Heart left ventricle (tissue), 16 donors: ENCODE measurements at regions of chr6 and their contacts with region 1.

Region 1: DNA sequence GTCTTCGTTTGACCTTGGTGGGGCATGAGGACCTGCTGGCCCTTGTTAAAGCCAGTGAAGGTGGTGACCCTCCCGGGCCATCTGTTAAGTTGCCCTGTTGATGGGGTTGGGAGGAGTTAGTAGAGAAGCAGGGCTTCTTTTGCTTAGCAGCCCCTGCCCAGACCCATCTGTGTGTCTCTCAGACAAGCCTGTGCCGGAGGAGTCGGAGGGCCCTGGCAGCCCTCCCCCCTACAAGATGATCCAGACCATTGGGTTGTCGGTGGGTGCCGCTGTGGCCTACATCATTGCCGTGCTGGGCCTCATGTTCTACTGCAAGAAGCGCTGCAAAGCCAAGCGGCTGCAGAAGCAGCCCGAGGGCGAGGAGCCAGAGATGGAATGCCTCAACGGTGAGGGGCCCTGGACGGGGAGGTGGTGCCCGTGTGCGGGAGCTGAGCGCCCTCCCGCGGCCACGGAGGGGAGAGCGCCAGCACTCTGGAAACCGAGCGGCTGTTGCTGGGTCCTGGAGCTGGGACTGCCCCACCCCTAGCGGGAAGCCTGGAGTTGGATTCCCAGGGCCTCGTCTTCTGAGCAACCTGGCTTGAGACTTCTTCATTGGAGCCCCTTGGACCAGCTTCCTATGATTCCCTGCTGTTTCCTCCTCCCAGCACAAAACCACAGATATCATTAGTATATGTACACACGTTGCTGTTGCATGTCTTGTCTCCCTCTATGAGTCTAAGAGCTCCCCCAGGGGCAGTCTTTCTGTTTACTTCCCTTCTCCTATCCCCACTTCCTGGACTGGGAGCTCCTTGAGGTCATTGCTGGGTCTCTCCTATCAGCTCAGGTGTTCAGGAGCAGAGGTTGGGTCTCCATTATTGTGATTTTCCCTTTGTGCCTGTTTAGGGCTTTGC is 27.6 kb upstream of the SRF start:
- DNase-seq: peak; percentile 87 to 95 (median 90)
- ATAC-seq: peak; percentile 84 to 97 (median 96)
- H3K4me3 ChIP-seq: peak overlapping the region in 2 of 12 donors; percentile 12 to 32
- H3K27ac ChIP-seq: peak overlapping the region in 8 of 12 donors; percentile 2 to 70 (median 34)
- H3K4me1 ChIP-seq: peaks cover 0 to 17% (median 11%) of the 10 kb centered on the region in 12 donors
- H3K27me3 ChIP-seq: no peaks in the 10 kb centered on the region
- CTCF ChIP-seq: peak; percentile 86 to 98 (median 94)
- POLR2A ChIP-seq: no peak

Region 2: DNA sequence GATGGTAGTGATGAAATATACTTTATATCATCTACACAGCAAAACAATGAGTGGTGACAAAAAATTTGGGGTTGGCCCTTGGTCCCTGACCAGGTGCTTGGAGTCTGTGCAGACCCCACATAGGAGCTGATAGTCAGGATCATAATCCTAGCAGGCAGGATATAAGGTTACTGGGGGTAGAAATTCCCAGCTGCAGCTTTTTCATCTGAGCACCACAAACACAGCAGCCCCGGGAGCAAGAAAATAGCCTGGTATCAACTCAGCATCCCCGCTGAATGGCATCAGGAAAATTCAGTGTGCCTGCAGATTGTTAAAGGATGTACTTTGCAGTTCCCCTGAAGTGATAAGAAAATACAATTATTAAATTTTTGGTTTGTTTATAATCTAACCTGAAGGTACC is 291.9 kb before region 1 on chr6:
- intact Hi-C with region 1: no loop called
- DNase-seq: no peak
- ATAC-seq: no peak
- H3K4me3 ChIP-seq: no peak overlapping the region
- H3K27ac ChIP-seq: no peak overlapping the region
- H3K4me1 ChIP-seq: no peaks in the 10 kb centered on the region
- H3K27me3 ChIP-seq: no peaks in the 10 kb centered on the region
- CTCF ChIP-seq: no peak
- POLR2A ChIP-seq: no peak

Region 3: GRCh38 chr6:42907336-42907735 is 236.1 kb before region 1 on chr6:
- intact Hi-C with region 1: loop called in 2 of 10 experiments (anchors 2 to 5 kb)
- DNase-seq: peak in 3 of 5 donors; percentile 20 to 53 (median 47)
- ATAC-seq: peak in 3 of 4 donors; percentile 76 to 80 (median 77)
- H3K4me3 ChIP-seq: no peak overlapping the region
- H3K27ac ChIP-seq: no peak overlapping the region
- H3K4me1 ChIP-seq: peaks cover 0 to 26% (median 5%) of the 10 kb centered on the region in 12 donors
- H3K27me3 ChIP-seq: peaks cover 0 to 15% (median 6%) of the 10 kb centered on the region in 9 donors
- CTCF ChIP-seq: no peak
- POLR2A ChIP-seq: no peak

Region 4: DNA sequence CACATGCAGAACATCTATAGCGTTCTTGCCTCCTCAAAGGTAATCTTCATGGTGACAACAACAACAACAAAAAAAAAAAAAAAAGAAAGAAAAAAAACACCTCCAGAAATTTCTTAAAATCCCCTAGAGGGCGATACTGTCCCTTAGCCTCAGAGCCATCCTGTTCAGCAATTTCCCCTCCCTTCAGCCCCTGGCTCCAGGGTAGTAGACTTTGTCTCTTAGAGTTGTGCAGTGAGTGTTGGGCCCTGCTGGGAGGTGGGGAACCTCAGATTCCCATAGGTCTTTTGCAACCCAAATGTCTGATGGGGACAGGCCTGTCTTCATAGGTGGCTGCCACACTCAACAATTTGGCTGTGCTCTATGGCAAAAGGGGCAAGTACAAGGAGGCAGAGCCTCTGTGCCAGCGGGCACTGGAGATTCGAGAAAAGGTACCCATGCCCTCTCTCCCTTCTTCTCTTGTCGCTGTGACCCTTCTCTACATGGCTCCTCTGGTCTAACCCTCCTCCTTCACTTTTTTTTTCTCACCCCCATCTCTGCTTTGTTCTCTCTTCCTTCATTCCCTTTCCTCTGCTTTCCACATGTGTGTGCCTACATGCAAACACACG is 73.3 kb before region 1 on chr6:
- intact Hi-C with region 1: loop called in 5 of 10 experiments (anchors 5 to 10 kb)
- DNase-seq: no peak
- ATAC-seq: no peak
- H3K4me3 ChIP-seq: no peak overlapping the region
- H3K27ac ChIP-seq: no peak overlapping the region
- H3K4me1 ChIP-seq: no peaks in the 10 kb centered on the region
- H3K27me3 ChIP-seq: no peaks in the 10 kb centered on the region
- CTCF ChIP-seq: peak in 9 of 12 donors; percentile 10 to 52 (median 39)
- POLR2A ChIP-seq: no peak

Region 5: GRCh38 chr6:43075670-43076463 is 67.6 kb before region 1 on chr6 and contains the start of gene PTK7:
- intact Hi-C with region 1: loop called in 5 of 10 experiments (anchors 5 to 10 kb)
- DNase-seq: peak in 3 of 5 donors; percentile 25 to 68 (median 46)
- ATAC-seq: peak; percentile 37 to 60 (median 47)
- H3K4me3 ChIP-seq: peak within 1 kb of the TSS; percentile 27 to 86 (median 58)
- H3K27ac ChIP-seq: no peak within 1 kb of the TSS
- H3K4me1 ChIP-seq: peaks cover 0 to 18% (median 5%) of the 10 kb centered on the region in 12 donors
- H3K27me3 ChIP-seq: peaks cover 0 to 22% (median 0%) of the 10 kb centered on the region in 9 donors
- CTCF ChIP-seq: no peak
- POLR2A ChIP-seq: no peak
- total RNA-seq, gene PTK7: 1.4 to 10.4 (median 1.9) TPM